ENCODE measurements at regions of chr11 and their contacts with region 1.

Region 1: GRCh38 chr11:9137293-9138132 is 46.1 kb upstream of the SCUBE2 start:
- DNase-seq: peak; percentile 68 to 74
- ATAC-seq: peak; percentile 89 to 95
- H3K4me3 ChIP-seq: no peak overlapping the region
- H3K27ac ChIP-seq: peak overlapping the region in 1 of 2 experiments; percentile 83; a peak in 4 of 6 replicates
- H3K4me1 ChIP-seq: peaks cover 30% of the 10 kb centered on the region
- CTCF ChIP-seq: peak; percentile 84
- EP300 ChIP-seq: no peak
- POLR2A ChIP-seq: no peak
- RAD21 ChIP-seq: peak; percentile 86 to 87

Region 2: GRCh38 chr11:8911029-8911826 is 226.3 kb before region 1 on chr11 and contains the start of gene AKIP1:
- CTCF ChIA-PET with region 1: interaction called, 17 read pairs
- POLR2A ChIA-PET with region 1: interaction called, 3 read pairs
- DNase-seq: peak; percentile 92 to 93
- ATAC-seq: peak; percentile 92 to 93
- H3K4me3 ChIP-seq: peak within 1 kb of the TSS; percentile 87
- H3K27ac ChIP-seq: peak within 1 kb of the TSS; percentile 98
- H3K4me1 ChIP-seq: peaks cover 42% of the 10 kb centered on the region
- CTCF ChIP-seq: no peak
- EP300 ChIP-seq: no peak
- POLR2A ChIP-seq: peak; percentile 77
- RAD21 ChIP-seq: no peak
- polyA plus RNA-seq, gene AKIP1: 61.3 and 66.7 TPM in 2 replicates

Region 3: DNA sequence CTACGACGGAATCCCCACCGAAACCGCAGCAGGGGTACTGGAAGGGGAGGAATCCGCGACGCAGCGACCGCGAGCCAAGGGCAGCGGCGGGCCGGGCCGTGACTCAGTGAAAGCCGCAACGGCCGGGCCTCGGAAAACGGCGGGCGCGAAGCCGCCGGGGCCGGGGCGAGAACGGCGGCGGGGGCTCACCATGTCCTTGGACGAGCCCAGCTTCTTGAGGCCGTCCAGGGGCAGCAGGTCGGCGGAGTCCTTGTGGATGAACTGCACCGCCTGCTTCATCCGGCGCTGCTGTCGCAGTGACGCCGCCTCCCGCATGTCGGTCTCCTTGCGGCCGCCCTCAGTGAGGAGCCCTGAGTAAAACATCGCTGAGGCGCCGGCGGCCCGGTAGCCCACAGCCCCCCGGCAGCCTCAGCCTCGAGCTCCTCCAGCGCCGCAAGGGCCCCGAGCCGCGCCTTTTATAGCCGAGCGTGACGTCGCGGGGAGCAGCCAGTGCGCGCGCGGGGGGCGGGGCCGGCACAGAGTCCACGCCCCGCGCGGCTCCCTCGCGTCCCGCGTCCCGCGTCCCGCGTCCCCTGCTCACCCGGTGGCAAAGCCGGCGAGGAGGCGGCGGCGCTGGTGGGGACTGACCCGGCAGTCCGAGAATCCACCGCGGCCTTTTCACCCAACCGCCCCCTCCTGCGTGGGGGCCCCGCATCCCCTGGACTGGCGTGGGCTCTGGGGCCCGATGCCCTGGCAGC is 133.8 kb before region 1 on chr11 and contains the start of gene NRIP3:
- CTCF ChIA-PET with region 1: interaction called, 16 read pairs
- POLR2A ChIA-PET with region 1: no interaction called
- DNase-seq: peak; percentile 43 to 48
- ATAC-seq: peak; percentile 67 to 88
- H3K4me3 ChIP-seq: peak within 1 kb of the TSS; percentile 50
- H3K27ac ChIP-seq: peak within 1 kb of the TSS in 1 of 2 experiments; percentile 82; a peak in 4 of 6 replicates
- H3K4me1 ChIP-seq: peaks cover 4% of the 10 kb centered on the region; the same call in 1 of the 3 replicates
- CTCF ChIP-seq: no peak
- EP300 ChIP-seq: no peak
- POLR2A ChIP-seq: 0 out of 2 replicates have a peak, but pooled peaks have one; percentile 6
- RAD21 ChIP-seq: no peak
- polyA plus RNA-seq, gene NRIP3: 1.0 and 1.4 TPM in 2 replicates

Region 4: GRCh38 chr11:9025101-9025850 is 112.2 kb before region 1 on chr11:
- CTCF ChIA-PET with region 1: interaction called, 12 read pairs
- POLR2A ChIA-PET with region 1: no interaction called
- DNase-seq: no peak
- ATAC-seq: no peak
- H3K4me3 ChIP-seq: no peak overlapping the region
- H3K27ac ChIP-seq: no peak overlapping the region
- H3K4me1 ChIP-seq: no peaks in the 10 kb centered on the region
- CTCF ChIP-seq: no peak
- EP300 ChIP-seq: no peak
- POLR2A ChIP-seq: no peak
- RAD21 ChIP-seq: no peak

Region 5: DNA sequence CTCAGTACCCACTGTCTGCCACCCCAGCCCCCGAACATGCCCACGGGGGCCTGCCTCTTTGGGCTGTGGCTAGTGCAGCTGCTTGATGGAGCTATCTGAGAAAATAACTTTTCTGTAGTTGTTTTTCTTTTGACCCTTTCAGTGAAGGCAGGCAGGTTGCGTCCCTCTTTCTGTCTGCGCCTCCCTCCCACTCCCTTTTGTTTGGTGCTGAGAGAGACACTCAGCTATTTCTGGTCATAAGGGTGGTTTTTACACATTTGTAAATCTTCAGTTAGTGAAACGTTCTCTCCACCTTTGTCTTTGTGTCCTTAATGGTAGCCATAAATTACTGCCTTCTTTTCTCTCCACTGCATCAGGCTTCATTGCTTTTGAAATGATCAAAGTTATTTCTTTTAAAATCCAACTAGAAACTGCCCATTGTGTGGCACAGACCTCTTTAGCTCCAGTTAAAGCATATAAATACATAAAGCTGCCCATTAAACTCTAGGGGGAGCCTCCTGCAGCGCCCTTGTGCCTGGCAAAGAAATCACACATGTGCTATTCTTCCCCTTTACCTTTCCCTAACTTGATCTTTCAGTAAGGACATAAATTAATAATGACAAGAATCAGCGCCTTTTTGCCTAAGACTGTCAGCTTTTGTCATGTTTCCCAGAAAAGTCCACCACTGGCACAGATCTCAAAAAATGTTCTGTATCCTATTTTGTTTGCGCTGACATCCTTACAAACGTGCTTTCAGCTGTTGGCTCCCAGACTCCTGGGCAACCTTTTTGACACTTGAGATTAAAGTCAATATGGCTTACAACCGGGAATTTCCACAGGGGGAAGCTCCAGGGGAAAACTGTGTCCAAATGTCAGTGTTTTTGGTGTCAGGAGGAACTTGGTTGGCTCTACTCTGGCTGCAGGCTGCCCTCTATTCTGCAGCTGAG is 44.4 kb before region 1 on chr11:
- CTCF ChIA-PET with region 1: interaction called, 19 read pairs
- POLR2A ChIA-PET with region 1: no interaction called
- DNase-seq: peak in 1 of 2 experiments; percentile 18
- ATAC-seq: peak; percentile 48 to 71; a peak in 3 of 6 replicates
- H3K4me3 ChIP-seq: no peak overlapping the region
- H3K27ac ChIP-seq: no peak overlapping the region
- H3K4me1 ChIP-seq: 0 out of 3 replicates have a peak, but pooled peaks cover 3% of the 10 kb centered on the region
- CTCF ChIP-seq: peak; percentile 46
- EP300 ChIP-seq: no peak
- POLR2A ChIP-seq: no peak
- RAD21 ChIP-seq: peak in 1 of 2 experiments; percentile 31; a peak in 1 of 5 replicates

Region 6: GRCh38 chr11:9103208-9103898 is 34.2 kb before region 1 on chr11:
- CTCF ChIA-PET with region 1: no interaction called
- POLR2A ChIA-PET with region 1: no interaction called
- DNase-seq: peak in 1 of 2 experiments; percentile 16
- ATAC-seq: no peak; a peak in 1 of 6 replicates
- H3K4me3 ChIP-seq: no peak overlapping the region
- H3K27ac ChIP-seq: no peak overlapping the region
- H3K4me1 ChIP-seq: peaks cover 3% of the 10 kb centered on the region; the same call in 1 of the 3 replicates
- CTCF ChIP-seq: no peak
- EP300 ChIP-seq: no peak
- POLR2A ChIP-seq: no peak
- RAD21 ChIP-seq: no peak

Region 7: GRCh38 chr11:9120664-9121485 is 16.6 kb before region 1 on chr11:
- CTCF ChIA-PET with region 1: interaction called, 14 read pairs
- POLR2A ChIA-PET with region 1: no interaction called
- DNase-seq: peak; percentile 33 to 39
- ATAC-seq: peak; percentile 73 to 93; a peak in 5 of 6 replicates
- H3K4me3 ChIP-seq: no peak overlapping the region
- H3K27ac ChIP-seq: no peak overlapping the region
- H3K4me1 ChIP-seq: no peaks in the 10 kb centered on the region
- CTCF ChIP-seq: peak; percentile 21; the same call in 1 of the 3 replicates
- EP300 ChIP-seq: no peak
- POLR2A ChIP-seq: no peak
- RAD21 ChIP-seq: peak in 1 of 2 experiments; percentile 22; a peak in 1 of 5 replicates

Region 8: DNA sequence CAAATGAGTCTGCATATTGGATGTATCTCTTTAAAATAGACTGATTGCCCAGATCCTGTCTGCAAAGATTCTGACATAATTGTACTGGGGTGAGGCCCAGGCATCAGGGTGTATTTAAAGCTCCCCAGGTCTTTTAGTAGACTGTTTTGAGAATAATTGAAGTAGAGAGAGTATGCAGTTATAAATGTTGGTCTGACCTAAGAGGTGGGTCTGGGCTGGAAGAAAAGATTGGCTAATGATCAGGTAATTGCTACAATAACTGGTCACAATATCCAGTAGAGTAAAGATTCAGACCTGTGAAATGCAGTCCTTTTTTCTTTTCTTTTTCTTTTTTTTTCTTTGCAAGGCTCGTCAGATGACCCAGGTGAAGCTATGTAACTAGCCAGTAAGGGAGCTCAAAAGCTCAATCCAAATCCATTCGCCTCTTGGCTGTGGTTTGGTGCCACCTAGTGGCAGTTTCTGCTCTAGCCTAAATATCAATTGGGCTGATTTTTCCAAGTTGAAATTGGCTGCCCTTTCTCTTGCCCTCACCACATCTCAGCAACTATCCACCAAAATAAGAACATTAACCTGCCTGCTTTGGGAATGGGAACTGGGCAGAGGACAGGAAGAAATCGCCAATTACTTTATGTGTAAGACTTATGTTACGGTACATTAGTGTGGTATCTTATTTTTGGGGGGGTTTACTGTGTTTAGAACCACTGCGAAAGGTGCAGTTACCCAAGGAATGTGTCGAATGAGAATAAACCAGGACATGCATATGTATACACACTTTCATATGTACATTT is 369.2 kb after region 1 on chr11:
- CTCF ChIA-PET with region 1: interaction called, 18 read pairs
- POLR2A ChIA-PET with region 1: no interaction called
- DNase-seq: peak; percentile 55 to 81
- ATAC-seq: peak; percentile 94 to 96
- H3K4me3 ChIP-seq: no peak overlapping the region
- H3K27ac ChIP-seq: no peak overlapping the region
- H3K4me1 ChIP-seq: peaks cover 29% of the 10 kb centered on the region
- CTCF ChIP-seq: peak; percentile 97
- EP300 ChIP-seq: no peak
- POLR2A ChIP-seq: no peak
- RAD21 ChIP-seq: peak; percentile 92 to 96